Heart left ventricle (tissue), 16 donors: ENCODE measurements at regions of chr2 and their contacts with region 1.

Region 1: DNA sequence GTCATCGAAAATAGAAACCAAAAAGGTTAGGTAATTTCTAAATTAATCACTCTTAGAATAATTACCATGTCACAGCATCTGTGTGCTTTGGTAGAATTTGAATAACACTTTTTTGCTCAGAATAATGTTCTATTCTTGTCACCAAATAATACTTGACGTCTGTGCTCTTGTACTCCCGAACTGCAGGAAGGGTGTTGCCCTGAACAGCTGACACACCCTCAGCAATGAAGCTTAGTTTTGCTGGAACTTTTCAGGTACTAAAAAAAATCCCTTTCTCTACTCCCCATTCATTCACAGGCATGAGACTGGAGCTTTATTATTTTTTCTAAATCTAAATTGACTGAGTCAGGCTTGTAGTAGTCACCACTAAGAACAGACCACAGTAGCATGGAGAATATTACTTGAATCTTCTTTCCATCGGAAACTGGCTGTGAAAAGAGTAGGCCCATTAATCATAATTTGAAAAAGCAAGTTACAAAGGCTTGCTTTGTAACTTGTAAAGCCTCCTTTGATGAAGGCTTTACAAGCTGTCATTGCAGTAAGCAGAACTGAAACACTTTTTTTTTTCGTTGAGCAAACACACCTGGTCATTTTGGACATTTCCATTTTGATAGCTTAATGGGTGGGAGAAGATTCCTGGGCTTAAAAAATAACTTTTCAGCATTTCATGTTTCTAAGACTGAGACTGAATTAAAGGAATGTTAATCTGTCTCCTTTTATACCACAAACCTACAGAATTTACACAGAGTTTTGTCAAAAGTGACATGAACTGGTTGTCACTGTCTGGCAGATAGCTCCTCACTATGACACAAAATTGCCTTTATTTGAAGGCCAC is 70.3 kb upstream of the PELI1 start:
- DNase-seq: peak in 3 of 5 donors; percentile 36 to 44 (median 38)
- ATAC-seq: peak; percentile 81 to 96 (median 87)
- H3K4me3 ChIP-seq: no peak overlapping the region
- H3K27ac ChIP-seq: peak overlapping the region; percentile 37 to 88 (median 78)
- H3K4me1 ChIP-seq: peaks cover 0 to 54% (median 15%) of the 10 kb centered on the region in 12 donors
- H3K27me3 ChIP-seq: no peaks in the 10 kb centered on the region
- CTCF ChIP-seq: no peak
- POLR2A ChIP-seq: peak in 1 of 2 donors; percentile 19

Region 2: DNA sequence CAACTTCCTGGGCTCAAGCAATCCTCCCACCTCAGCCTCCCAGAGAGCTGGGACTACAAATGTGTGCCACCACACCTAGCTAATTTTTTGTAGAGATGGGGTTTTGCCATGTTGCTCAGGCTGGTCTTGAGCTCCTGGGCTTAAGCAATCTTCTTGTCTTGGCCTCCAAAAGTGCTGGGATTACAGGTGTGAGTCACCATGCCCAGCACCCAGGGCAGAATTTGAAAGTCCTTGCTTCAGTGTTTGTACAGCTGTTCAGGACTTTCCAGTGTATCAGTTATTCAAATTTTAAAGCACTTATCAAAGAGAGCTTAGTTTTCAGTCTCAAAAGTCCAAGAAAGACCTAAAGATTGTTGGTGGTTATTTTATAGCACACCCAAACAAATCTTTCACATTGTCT is 151.7 kb before region 1 on chr2:
- intact Hi-C with region 1: loop called in 1 of 10 experiments (anchors 10 kb)
- DNase-seq: no peak
- ATAC-seq: no peak
- H3K4me3 ChIP-seq: no peak overlapping the region
- H3K27ac ChIP-seq: no peak overlapping the region
- H3K4me1 ChIP-seq: peaks cover 0 to 28% (median 8%) of the 10 kb centered on the region in 12 donors
- H3K27me3 ChIP-seq: no peaks in the 10 kb centered on the region
- CTCF ChIP-seq: no peak
- POLR2A ChIP-seq: no peak

Region 3: DNA sequence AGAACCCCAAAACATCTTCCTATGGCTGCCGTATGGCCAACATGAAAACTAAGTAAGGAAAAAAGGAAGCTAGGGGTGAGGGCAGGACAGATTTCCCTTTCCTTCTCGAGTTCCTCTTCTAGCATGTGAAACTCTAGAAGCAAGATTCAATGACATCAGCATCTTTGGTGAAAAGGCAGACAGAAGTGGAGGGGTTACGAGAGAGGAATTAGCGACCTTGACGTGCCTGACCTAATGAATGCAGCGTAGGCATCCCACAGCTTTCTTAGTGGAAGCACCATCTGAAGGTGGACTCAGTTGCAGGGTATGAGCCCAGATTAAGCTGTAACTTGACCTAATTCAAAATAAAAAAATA is 22.4 kb before region 1 on chr2:
- intact Hi-C with region 1: no loop called
- DNase-seq: no peak
- ATAC-seq: peak; percentile 47 to 80 (median 68)
- H3K4me3 ChIP-seq: no peak overlapping the region
- H3K27ac ChIP-seq: peak overlapping the region in 4 of 12 donors; percentile 13 to 89 (median 34)
- H3K4me1 ChIP-seq: peaks cover 0 to 53% (median 0%) of the 10 kb centered on the region in 12 donors
- H3K27me3 ChIP-seq: no peaks in the 10 kb centered on the region
- CTCF ChIP-seq: no peak
- POLR2A ChIP-seq: no peak